Heart right ventricle (tissue), 16 donors: ENCODE measurements at regions of chr5 and their contacts with region 1.

Region 1: GRCh38 chr5:150469718-150470469 is 20.4 kb upstream of the RPS14 start:
- DNase-seq: no peak
- ATAC-seq: no peak
- H3K4me3 ChIP-seq: no peak overlapping the region
- H3K27ac ChIP-seq: no peak overlapping the region
- H3K4me1 ChIP-seq: peaks cover 0 to 27% (median 13%) of the 10 kb centered on the region in 9 donors
- H3K27me3 ChIP-seq: no peaks in the 10 kb centered on the region
- CTCF ChIP-seq: no peak

Region 2: GRCh38 chr5:150503977-150504620 is 34.2 kb after region 1 on chr5:
- intact Hi-C with region 1: loop called in 1 of 10 experiments (anchors 5 kb)
- DNase-seq: peak; percentile 60 to 70
- ATAC-seq: peak; percentile 57 to 75 (median 67)
- H3K4me3 ChIP-seq: no peak overlapping the region
- H3K27ac ChIP-seq: peak overlapping the region; percentile 59 to 93 (median 85)
- H3K4me1 ChIP-seq: peaks cover 62 to 100% (median 100%) of the 10 kb centered on the region in 9 donors
- H3K27me3 ChIP-seq: no peaks in the 10 kb centered on the region
- CTCF ChIP-seq: peak in 4 of 9 donors; percentile 12 to 34 (median 18)

Region 3: GRCh38 chr5:151126199-151126645 is 656.3 kb after region 1 on chr5:
- intact Hi-C with region 1: no loop called
- DNase-seq: peak; percentile 65 to 79
- ATAC-seq: peak; percentile 34 to 70 (median 60)
- H3K4me3 ChIP-seq: no peak overlapping the region
- H3K27ac ChIP-seq: peak overlapping the region in 2 of 10 donors; percentile 28 to 58
- H3K4me1 ChIP-seq: peaks cover 9 to 34% (median 16%) of the 10 kb centered on the region in 9 donors
- H3K27me3 ChIP-seq: no peaks in the 10 kb centered on the region
- CTCF ChIP-seq: peak; percentile 64 to 90 (median 84)